Spleen (tissue), 13 donors: ENCODE measurements at regions of chr18 and their contacts with region 1.

Region 1: DNA sequence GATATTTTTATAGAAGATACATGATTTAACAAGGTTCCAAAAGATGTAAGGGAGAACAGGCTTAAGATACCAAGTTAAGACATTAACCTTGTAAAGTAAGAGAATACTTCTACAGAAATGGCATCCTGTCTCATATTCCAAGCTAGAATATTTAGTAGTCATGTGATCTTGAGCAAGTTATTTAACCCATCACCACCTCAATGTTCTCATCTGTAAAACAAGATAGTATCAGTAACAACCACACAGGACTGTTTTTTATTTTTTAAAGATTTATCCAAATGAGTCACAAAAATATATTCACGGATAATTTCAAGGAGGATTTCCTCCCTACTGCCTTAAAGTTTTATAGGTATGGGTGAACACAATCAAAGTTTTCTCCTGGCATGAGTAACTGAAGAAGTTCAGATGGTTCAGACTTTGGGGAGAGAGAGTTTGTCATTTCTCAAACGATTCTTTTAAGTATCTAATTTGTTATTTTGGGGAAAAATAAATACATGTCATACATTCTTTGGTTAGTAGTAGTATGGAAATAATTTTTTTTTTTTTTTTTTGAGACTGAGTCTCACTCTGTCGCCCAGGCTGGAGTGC is 25.9 kb downstream of the ROCK1 start:
- DNase-seq: no peak
- H3K4me3 ChIP-seq: no peak overlapping the region
- H3K27ac ChIP-seq: no peak overlapping the region
- H3K4me1 ChIP-seq: peaks cover 0 to 95% (median 29%) of the 10 kb centered on the region in 6 donors
- H3K27me3 ChIP-seq: no peaks in the 10 kb centered on the region
- CTCF ChIP-seq: no peak
- POLR2A ChIP-seq: no peak

Region 2: DNA sequence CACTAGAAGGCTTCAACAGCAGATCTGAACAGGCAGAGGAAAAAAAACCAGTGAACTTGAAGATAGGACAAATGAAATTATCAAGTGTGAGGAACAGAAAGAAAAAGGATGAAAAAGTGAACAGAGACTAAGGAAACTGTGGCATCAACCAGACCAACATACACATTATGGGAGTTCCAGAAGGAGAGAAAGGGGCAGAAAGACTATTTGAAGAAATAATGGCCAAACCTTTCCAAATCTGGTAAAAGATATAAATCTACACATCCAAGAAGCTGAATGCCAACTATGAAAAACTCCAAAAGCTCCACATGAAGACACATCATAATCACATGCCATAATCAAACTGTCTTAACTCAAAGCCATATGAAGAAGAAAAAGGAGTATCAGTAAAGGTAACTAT is 53.8 kb before region 1 on chr18:
- intact Hi-C with region 1: loop called (anchors 10 kb)
- DNase-seq: no peak
- H3K4me3 ChIP-seq: no peak overlapping the region
- H3K27ac ChIP-seq: no peak overlapping the region
- H3K4me1 ChIP-seq: peaks cover 0 to 1% (median 0%) of the 10 kb centered on the region in 6 donors
- H3K27me3 ChIP-seq: no peaks in the 10 kb centered on the region
- CTCF ChIP-seq: no peak
- POLR2A ChIP-seq: no peak